Panc1 (cell line): ENCODE measurements at regions of chr5 and their contacts with region 1.

Region 1: DNA sequence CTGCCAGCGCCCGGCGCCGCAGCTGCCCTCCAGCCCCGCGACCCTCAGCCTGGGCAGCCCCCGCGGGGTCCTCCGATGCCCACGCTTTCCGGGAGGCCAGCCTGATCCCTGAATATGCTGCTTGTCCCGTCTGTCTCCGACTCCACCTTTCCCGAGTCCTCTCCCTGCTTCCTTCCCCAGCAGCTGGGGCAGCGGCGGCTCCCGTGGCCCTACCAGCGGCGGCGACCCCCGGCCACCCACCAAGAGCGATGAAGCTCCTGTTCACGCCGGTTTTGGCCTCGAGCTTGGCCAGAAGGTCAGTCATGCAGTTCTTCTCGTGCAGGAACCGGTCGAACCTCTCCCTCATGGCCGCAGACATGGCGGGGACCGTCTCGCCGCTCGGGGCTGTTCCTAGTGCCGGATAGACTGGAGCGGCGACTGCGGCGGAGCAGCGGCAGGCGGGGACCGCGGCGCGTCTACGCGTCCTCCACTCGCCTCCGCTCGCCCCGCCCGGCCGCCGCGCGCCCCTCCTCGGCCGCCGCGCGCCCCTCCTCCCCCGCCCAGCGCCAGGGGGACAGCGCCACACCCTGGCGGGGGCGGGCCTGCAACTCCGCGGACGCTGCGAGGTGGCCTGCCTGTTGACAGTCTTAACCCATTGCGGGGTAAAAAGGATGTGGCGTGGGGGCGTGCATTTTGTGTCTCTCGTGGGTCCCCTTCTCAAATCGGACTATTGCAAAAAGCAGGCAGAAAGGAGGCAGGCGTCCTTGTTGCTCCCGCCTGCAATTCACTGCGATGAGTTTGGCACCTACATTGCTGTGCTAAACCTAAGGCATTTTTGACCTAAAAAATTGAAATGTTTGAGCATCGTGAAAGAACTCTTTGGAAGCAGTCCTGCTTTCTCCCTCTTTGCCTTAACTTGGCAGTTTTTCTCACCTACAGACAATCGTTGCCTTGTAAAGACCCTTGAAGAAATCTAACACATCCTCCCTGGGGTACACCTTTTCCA is at the start of gene REEP5:
- DNase-seq: no peak
- ATAC-seq: peak; percentile 94
- H3K4me3 ChIP-seq: peak within 1 kb of the TSS; percentile 89 to 92
- H3K27ac ChIP-seq: peak within 1 kb of the TSS; percentile 89
- H3K4me1 ChIP-seq: peaks cover 35% of the 10 kb centered on the region
- H3K27me3 ChIP-seq: no peaks in the 10 kb centered on the region
- CTCF ChIP-seq: peak; percentile 97
- total RNA-seq, gene REEP5: 112 TPM

Region 2: GRCh38 chr5:112467485-112467884 is 454.6 kb before region 1 on chr5:
- CTCF ChIA-PET with region 1: no interaction called
- POLR2A ChIA-PET with region 1: no interaction called
- in situ Hi-C with region 1: no loop called
- intact Hi-C with region 1: no loop called
- DNase-seq: no peak
- ATAC-seq: no peak
- H3K4me3 ChIP-seq: no peak overlapping the region
- H3K27ac ChIP-seq: no peak overlapping the region
- H3K4me1 ChIP-seq: no peaks in the 10 kb centered on the region
- H3K27me3 ChIP-seq: no peaks in the 10 kb centered on the region
- CTCF ChIP-seq: no peak

Region 3: GRCh38 chr5:112902561-112902960 is 19.6 kb before region 1 on chr5:
- CTCF ChIA-PET with region 1: no interaction called
- POLR2A ChIA-PET with region 1: no interaction called
- in situ Hi-C with region 1: no loop called
- intact Hi-C with region 1: no loop called
- DNase-seq: no peak
- ATAC-seq: no peak
- H3K4me3 ChIP-seq: no peak overlapping the region
- H3K27ac ChIP-seq: no peak overlapping the region
- H3K4me1 ChIP-seq: no peaks in the 10 kb centered on the region
- H3K27me3 ChIP-seq: no peaks in the 10 kb centered on the region
- CTCF ChIP-seq: no peak

Region 4: DNA sequence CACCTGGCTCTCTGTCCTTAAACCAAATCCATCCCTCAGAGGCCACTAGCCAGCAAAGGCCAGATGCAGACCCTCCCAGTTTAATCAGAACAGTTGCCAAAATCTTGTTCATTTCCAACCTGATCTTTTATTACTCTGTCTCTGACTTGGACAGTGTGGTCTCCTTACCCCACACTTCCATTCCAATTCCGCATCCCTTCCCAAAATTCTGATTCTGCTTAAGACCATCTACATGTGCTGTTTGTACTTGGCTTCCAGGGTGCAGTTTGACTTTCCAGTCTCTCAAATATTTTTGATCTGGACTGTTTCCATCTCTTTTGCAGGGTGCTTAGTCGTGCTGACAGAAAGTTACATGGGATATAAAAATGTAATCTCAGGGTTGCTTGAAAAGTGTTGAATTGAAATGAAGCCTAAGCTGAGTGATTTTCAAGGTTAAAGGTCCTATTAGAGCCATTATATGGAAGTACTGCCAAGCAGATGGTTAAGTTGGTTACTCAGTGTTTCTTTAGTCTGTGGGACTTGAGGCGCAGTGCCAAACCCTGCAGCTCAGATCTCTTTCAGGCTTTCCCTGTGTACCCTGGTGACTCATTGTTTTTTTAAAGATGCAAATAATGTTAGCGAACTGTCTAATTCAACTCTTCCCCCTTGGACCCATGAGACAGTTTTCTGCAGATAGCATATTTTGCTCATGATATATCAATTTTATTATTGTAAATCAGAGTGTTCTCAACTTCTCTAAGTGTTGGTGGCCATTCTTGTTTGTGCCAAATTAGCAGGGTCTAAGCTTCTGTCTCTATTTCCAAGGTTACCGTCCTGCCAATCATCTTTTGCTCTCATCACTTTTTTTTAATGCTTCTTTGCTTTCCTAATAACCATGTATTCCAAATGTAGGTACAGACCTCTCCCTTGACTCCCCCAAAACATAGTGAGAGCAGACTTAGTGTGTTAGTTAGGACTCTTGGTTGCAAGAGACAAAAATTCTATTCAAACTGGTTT is 36.3 kb after region 1 on chr5:
- CTCF ChIA-PET with region 1: no interaction called
- POLR2A ChIA-PET with region 1: no interaction called
- in situ Hi-C with region 1: no loop called
- intact Hi-C with region 1: loop called (anchors 5 kb)
- DNase-seq: peak; percentile 87
- ATAC-seq: peak; percentile 95
- H3K4me3 ChIP-seq: peak overlapping the region in 1 of 2 experiments; percentile 28; a peak in 2 of 4 replicates
- H3K27ac ChIP-seq: peak overlapping the region; percentile 96
- H3K4me1 ChIP-seq: peaks cover 56% of the 10 kb centered on the region
- H3K27me3 ChIP-seq: no peaks in the 10 kb centered on the region
- CTCF ChIP-seq: no peak

Region 5: GRCh38 chr5:113330533-113331208 is 408.5 kb after region 1 on chr5:
- CTCF ChIA-PET with region 1: no interaction called
- POLR2A ChIA-PET with region 1: interaction called, 13 read pairs
- in situ Hi-C with region 1: no loop called
- intact Hi-C with region 1: no loop called
- DNase-seq: no peak
- ATAC-seq: no peak
- H3K4me3 ChIP-seq: no peak overlapping the region
- H3K27ac ChIP-seq: no peak overlapping the region
- H3K4me1 ChIP-seq: no peaks in the 10 kb centered on the region
- H3K27me3 ChIP-seq: no peaks in the 10 kb centered on the region
- CTCF ChIP-seq: peak; percentile 42; the same call in 1 of the 2 replicates